T-cell (primary cell): ENCODE measurements at regions of chr16 and their contacts with region 1.

Region 1: GRCh38 chr16:25546791-25547190 is 145.0 kb upstream of the HS3ST4 start:
- DNase-seq: no peak
- ATAC-seq: no peak
- H3K4me3 ChIP-seq: no peak overlapping the region
- H3K4me3 Mint-ChIP-seq: no peak overlapping the region
- H3K27ac ChIP-seq: no peak overlapping the region
- H3K27ac Mint-ChIP-seq: no peak overlapping the region
- H3K4me1 ChIP-seq: no peaks in the 10 kb centered on the region
- H3K4me1 Mint-ChIP-seq: no peaks in the 10 kb centered on the region
- H3K27me3 ChIP-seq: no peaks in the 10 kb centered on the region
- H3K27me3 Mint-ChIP-seq: peaks cover 1 to 5% of the 10 kb centered on the region in 2 donors

Region 2: DNA sequence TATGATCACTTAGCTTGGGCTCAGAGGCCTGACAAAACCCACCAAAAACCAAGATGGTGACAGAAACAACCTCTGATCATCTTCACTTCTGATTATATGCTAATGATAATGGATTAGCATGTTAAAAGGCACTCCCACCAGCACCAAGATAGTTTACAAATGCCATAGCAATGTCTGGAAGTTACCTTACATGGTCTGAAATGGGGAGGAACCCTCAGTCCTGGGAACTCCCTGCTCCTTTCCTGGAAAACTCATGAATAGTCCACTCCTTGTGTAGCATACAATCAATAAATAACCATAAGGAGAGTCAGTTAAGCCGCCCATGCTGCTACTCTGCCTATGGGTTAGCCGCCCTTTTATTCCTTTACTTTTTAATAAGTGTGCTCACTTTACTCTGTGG is 24.9 kb after region 1 on chr16:
- CTCF ChIA-PET with region 1: no interaction called
- POLR2A ChIA-PET with region 1: interaction called in 1 of 2 experiments, 10 read pairs
- DNase-seq: no peak
- ATAC-seq: no peak
- H3K4me3 ChIP-seq: no peak overlapping the region
- H3K4me3 Mint-ChIP-seq: no peak overlapping the region
- H3K27ac ChIP-seq: no peak overlapping the region
- H3K27ac Mint-ChIP-seq: no peak overlapping the region
- H3K4me1 ChIP-seq: no peaks in the 10 kb centered on the region
- H3K4me1 Mint-ChIP-seq: no peaks in the 10 kb centered on the region
- H3K27me3 ChIP-seq: peaks cover 0 to 3% of the 10 kb centered on the region in 2 experiments
- H3K27me3 Mint-ChIP-seq: peaks cover 4 to 15% of the 10 kb centered on the region in 2 donors

Region 3: GRCh38 chr16:25691519-25692091 is 144.8 kb after region 1 on chr16 and contains the start of gene HS3ST4:
- CTCF ChIA-PET with region 1: no interaction called
- POLR2A ChIA-PET with region 1: no interaction called
- DNase-seq: no peak
- ATAC-seq: no peak
- H3K4me3 ChIP-seq: no peak within 1 kb of the TSS
- H3K4me3 Mint-ChIP-seq: peak within 1 kb of the TSS in 2 of 3 donors; percentile 39 to 73
- H3K27ac ChIP-seq: no peak within 1 kb of the TSS
- H3K27ac Mint-ChIP-seq: no peak within 1 kb of the TSS
- H3K4me1 ChIP-seq: no peaks in the 10 kb centered on the region
- H3K4me1 Mint-ChIP-seq: peaks cover 5 to 15% (median 14%) of the 10 kb centered on the region in 3 donors
- H3K27me3 ChIP-seq: peaks cover 11 to 32% of the 10 kb centered on the region in 2 experiments
- H3K27me3 Mint-ChIP-seq: peaks cover 54 to 70% of the 10 kb centered on the region in 2 donors
- total RNA-seq, gene HS3ST4: not detected